K562 (cell line): ENCODE measurements at regions of chr11 and their contacts with region 1.

Region 1: GRCh38 chr11:75328426-75329277 is 22.8 kb downstream of the ARRB1 start:
- DNase-seq: peak; percentile 40 to 73 (median 57)
- ATAC-seq: peak; percentile 90
- H3K4me3 ChIP-seq: no peak overlapping the region
- H3K27ac ChIP-seq: peak overlapping the region; percentile 16; the same call in 2 of the 3 replicates
- H3K4me1 ChIP-seq: peaks cover 26 to 33% of the 10 kb centered on the region in 2 experiments; a peak in 4 of 5 replicates
- H3K27me3 ChIP-seq: no peaks in the 10 kb centered on the region
- CTCF ChIP-seq: peak; percentile 72 to 84 (median 80)
- EP300 ChIP-seq: no peak
- POLR2A ChIP-seq: no peak
- RAD21 ChIP-seq: peak; percentile 92 to 94

Region 2: GRCh38 chr11:75280227-75280701 is 48.4 kb before region 1 on chr11:
- CTCF ChIA-PET with region 1: interaction called, 6 read pairs
- POLR2A ChIA-PET with region 1: interaction called, 3 read pairs
- in situ Hi-C with region 1: no loop called
- intact Hi-C with region 1: loop called (anchors 1 kb)
- DNase-seq: peak; percentile 80 to 85 (median 84)
- ATAC-seq: peak; percentile 97
- H3K4me3 ChIP-seq: no peak overlapping the region
- H3K27ac ChIP-seq: no peak overlapping the region
- H3K4me1 ChIP-seq: peaks cover 0 to 7% of the 10 kb centered on the region in 2 experiments; a peak in 1 of 5 replicates
- H3K27me3 ChIP-seq: no peaks in the 10 kb centered on the region
- CTCF ChIP-seq: peak; percentile 88 to 94 (median 90)
- EP300 ChIP-seq: no peak
- POLR2A ChIP-seq: no peak
- RAD21 ChIP-seq: peak; percentile 83 to 95

Region 3: GRCh38 chr11:75380711-75381420 is 52.2 kb after region 1 on chr11:
- CTCF ChIA-PET with region 1: interaction called, 24 read pairs
- POLR2A ChIA-PET with region 1: no interaction called
- in situ Hi-C with region 1: loop called (anchors 5 kb)
- intact Hi-C with region 1: loop called (anchors 1 kb)
- DNase-seq: no peak
- ATAC-seq: no peak
- H3K4me3 ChIP-seq: no peak overlapping the region
- H3K27ac ChIP-seq: no peak overlapping the region
- H3K4me1 ChIP-seq: peaks cover 12 to 21% of the 10 kb centered on the region in 2 experiments; a peak in 4 of 5 replicates
- H3K27me3 ChIP-seq: no peaks in the 10 kb centered on the region
- CTCF ChIP-seq: no peak
- EP300 ChIP-seq: no peak
- POLR2A ChIP-seq: no peak
- RAD21 ChIP-seq: no peak

Region 4: GRCh38 chr11:75445315-75445953 is 116.8 kb after region 1 on chr11:
- CTCF ChIA-PET with region 1: no interaction called
- POLR2A ChIA-PET with region 1: no interaction called
- in situ Hi-C with region 1: no loop called
- intact Hi-C with region 1: no loop called
- DNase-seq: peak; percentile 80 to 86 (median 84)
- ATAC-seq: peak; percentile 93
- H3K4me3 ChIP-seq: no peak overlapping the region
- H3K27ac ChIP-seq: no peak overlapping the region
- H3K4me1 ChIP-seq: peaks cover 0 to 17% of the 10 kb centered on the region in 2 experiments; a peak in 1 of 5 replicates
- H3K27me3 ChIP-seq: no peaks in the 10 kb centered on the region
- CTCF ChIP-seq: peak; percentile 91 to 99 (median 95)
- EP300 ChIP-seq: no peak
- POLR2A ChIP-seq: no peak
- RAD21 ChIP-seq: peak; percentile 98 to 99